ENCODE measurements at regions of chr11 and their contacts with region 1.

Region 1: GRCh38 chr11:3797329-3798095 is at the start of gene NUP98:
- DNase-seq: peak; percentile 99
- ATAC-seq: peak; percentile 93
- H3K4me3 Mint-ChIP-seq: peak within 1 kb of the TSS; percentile 98
- H3K27ac Mint-ChIP-seq: peak within 1 kb of the TSS; percentile 99
- H3K4me1 Mint-ChIP-seq: peaks cover 43% of the 10 kb centered on the region
- H3K27me3 Mint-ChIP-seq: no peaks in the 10 kb centered on the region
- CTCF ChIP-seq: no peak
- total RNA-seq, gene NUP98: 98.0 and 117 TPM in 2 replicates

Region 2: DNA sequence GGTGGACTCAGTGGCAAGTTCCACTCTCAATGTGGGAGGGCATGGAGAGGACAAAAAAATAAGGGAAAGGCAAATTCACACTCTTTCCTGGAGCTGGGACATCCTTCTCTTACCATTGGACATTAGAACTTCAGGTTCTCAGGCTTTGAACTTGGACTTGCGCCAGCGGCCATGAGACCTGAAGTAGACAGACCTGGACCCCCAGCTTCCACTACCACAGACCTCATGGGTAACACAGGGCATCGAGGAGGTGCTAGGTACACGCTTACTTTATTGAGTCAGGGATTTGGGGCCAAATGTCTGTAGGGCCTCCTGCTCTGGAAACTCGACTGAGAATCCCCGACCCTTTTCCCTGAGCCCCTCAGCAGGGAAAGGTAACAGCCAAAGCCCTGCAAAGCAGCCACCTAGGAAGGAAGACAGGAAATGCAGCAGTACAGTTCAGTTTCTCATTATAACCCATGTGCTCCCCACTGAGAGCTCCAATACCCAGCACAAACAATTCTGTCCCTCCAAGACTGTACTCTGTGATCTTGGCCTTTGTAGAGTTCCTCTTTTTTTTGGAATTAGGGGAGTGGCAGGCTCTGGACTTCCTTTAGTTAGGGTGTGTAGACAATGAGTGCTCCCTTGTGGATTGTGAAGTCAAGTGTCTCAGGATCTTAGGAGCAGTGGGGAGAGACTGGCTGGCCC is 132.0 kb before region 1 on chr11:
- CTCF ChIA-PET with region 1: no interaction called
- POLR2A ChIA-PET with region 1: no interaction called
- intact Hi-C with region 1: no loop called
- DNase-seq: no peak
- ATAC-seq: no peak
- H3K4me3 Mint-ChIP-seq: no peak overlapping the region
- H3K27ac Mint-ChIP-seq: no peak overlapping the region
- H3K4me1 Mint-ChIP-seq: no peaks in the 10 kb centered on the region
- H3K27me3 Mint-ChIP-seq: no peaks in the 10 kb centered on the region
- CTCF ChIP-seq: no peak

Region 3: GRCh38 chr11:3781423-3781822 is 16.1 kb before region 1 on chr11:
- CTCF ChIA-PET with region 1: interaction called, 3 read pairs
- POLR2A ChIA-PET with region 1: interaction called, 14 read pairs
- intact Hi-C with region 1: loop called (anchors 1 kb)
- DNase-seq: no peak
- ATAC-seq: no peak
- H3K4me3 Mint-ChIP-seq: no peak overlapping the region
- H3K27ac Mint-ChIP-seq: peak overlapping the region; percentile 56
- H3K4me1 Mint-ChIP-seq: peaks cover 46% of the 10 kb centered on the region
- H3K27me3 Mint-ChIP-seq: no peaks in the 10 kb centered on the region
- CTCF ChIP-seq: no peak

Region 4: DNA sequence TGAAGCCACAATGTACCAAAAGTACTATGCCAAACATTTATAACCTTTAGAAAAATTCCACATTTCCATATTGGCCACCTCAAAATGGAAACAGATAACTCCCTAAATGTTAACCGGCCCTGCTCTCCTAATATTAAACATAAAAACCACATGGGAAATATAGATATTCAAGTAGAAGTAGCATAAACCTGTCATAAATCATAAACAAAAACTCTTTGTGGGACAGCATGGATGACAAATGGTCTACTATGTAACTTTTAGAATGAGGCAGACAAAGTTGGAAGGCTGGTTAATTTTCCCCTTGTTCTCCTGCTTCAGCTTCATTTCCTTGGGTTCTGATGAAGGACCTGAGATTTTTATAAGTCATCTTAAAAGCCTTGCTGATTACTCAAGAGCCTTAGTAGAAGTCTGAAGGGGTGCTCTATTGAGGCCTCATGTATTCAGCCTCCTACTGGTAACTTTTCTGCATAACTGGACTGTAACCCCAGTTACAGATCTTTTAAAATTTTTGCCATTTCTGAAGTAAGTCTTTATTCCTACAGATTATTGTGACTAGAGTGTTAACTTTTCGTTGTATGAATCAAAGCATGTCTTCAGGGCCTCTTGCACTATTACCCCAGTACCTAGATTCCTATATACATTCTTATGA is 174.4 kb after region 1 on chr11:
- CTCF ChIA-PET with region 1: no interaction called
- POLR2A ChIA-PET with region 1: no interaction called
- intact Hi-C with region 1: no loop called
- DNase-seq: no peak
- ATAC-seq: peak; percentile 60
- H3K4me3 Mint-ChIP-seq: no peak overlapping the region
- H3K27ac Mint-ChIP-seq: no peak overlapping the region
- H3K4me1 Mint-ChIP-seq: peaks cover 11% of the 10 kb centered on the region
- H3K27me3 Mint-ChIP-seq: no peaks in the 10 kb centered on the region
- CTCF ChIP-seq: no peak

Region 5: GRCh38 chr11:4025248-4025966 is 227.9 kb after region 1 on chr11:
- CTCF ChIA-PET with region 1: no interaction called
- POLR2A ChIA-PET with region 1: no interaction called
- intact Hi-C with region 1: no loop called
- DNase-seq: no peak
- ATAC-seq: no peak
- H3K4me3 Mint-ChIP-seq: no peak overlapping the region
- H3K27ac Mint-ChIP-seq: no peak overlapping the region
- H3K4me1 Mint-ChIP-seq: no peaks in the 10 kb centered on the region
- H3K27me3 Mint-ChIP-seq: no peaks in the 10 kb centered on the region
- CTCF ChIP-seq: no peak

Region 6: DNA sequence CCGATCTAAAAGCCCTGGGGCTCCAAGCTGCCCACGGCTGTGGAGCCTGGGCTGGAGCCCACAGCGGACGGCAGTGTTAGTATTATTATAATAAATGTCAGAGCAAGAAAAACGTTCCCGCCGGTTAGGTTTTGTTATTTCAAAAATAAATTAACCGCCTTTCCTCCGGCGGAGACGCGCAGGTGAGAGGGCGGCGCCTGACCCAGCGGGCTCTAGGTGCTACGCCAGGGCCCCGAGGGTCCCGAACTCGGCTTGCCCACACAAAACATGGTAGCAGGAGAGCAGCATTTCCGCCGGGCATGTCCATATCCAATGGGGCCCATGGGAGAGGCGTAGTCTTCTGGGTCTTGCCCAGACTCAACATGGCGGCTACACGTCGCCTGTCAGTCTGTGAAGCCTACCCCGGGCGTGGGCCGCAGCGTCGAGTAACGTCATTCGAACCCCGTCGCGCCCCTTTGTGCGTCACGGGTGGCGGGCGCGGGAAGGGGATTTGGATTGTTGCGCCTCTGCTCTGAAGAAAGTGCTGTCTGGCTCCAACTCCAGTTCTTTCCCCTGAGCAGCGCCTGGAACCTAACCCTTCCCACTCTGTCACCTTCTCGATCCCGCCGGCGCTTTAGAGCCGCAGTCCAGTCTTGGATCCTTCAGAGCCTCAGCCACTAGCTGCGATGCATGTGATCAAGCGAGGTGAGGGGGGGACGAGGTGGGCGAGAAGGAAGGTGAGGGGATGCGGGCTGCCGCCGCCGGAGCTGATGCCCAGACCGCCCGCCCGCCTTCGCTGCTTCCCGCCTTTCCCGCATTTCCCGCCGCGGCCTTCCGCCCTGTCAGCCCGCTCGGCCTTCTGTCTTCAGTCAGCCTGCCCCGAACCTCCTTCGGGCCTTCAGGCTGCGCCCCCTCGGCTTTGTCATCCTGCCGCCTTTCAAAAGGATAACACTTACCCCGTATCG is 297.1 kb after region 1 on chr11 and contains the start of gene RRM1:
- CTCF ChIA-PET with region 1: no interaction called
- POLR2A ChIA-PET with region 1: no interaction called
- intact Hi-C with region 1: loop called (anchors 1 kb)
- DNase-seq: peak; percentile 89
- ATAC-seq: peak; percentile 98
- H3K4me3 Mint-ChIP-seq: peak within 1 kb of the TSS; percentile 96
- H3K27ac Mint-ChIP-seq: peak within 1 kb of the TSS; percentile 95
- H3K4me1 Mint-ChIP-seq: peaks cover 36% of the 10 kb centered on the region
- H3K27me3 Mint-ChIP-seq: no peaks in the 10 kb centered on the region
- CTCF ChIP-seq: no peak
- total RNA-seq, gene RRM1: 34.6 and 39.6 TPM in 2 replicates